Endothelial cell of umbilical vein (primary cell): ENCODE measurements at regions of chr14 and their contacts with region 1.

Region 1: GRCh38 chr14:54396493-54397335 is at the start of gene CDKN3:
- DNase-seq: peak; percentile 100
- H3K4me3 ChIP-seq: peak within 1 kb of the TSS; percentile 7 to 76 (median 61)
- H3K27ac ChIP-seq: peak within 1 kb of the TSS; percentile 14
- H3K4me1 ChIP-seq: peaks cover 8% of the 10 kb centered on the region
- H3K27me3 ChIP-seq: peaks cover 0 to 4% of the 10 kb centered on the region in 2 experiments
- CTCF ChIP-seq: peak in 1 of 2 donors; percentile 42
- POLR2A ChIP-seq: peak; percentile 65
- total RNA-seq, gene CDKN3: 52.0 and 53.2 TPM in 2 replicates

Region 2: DNA sequence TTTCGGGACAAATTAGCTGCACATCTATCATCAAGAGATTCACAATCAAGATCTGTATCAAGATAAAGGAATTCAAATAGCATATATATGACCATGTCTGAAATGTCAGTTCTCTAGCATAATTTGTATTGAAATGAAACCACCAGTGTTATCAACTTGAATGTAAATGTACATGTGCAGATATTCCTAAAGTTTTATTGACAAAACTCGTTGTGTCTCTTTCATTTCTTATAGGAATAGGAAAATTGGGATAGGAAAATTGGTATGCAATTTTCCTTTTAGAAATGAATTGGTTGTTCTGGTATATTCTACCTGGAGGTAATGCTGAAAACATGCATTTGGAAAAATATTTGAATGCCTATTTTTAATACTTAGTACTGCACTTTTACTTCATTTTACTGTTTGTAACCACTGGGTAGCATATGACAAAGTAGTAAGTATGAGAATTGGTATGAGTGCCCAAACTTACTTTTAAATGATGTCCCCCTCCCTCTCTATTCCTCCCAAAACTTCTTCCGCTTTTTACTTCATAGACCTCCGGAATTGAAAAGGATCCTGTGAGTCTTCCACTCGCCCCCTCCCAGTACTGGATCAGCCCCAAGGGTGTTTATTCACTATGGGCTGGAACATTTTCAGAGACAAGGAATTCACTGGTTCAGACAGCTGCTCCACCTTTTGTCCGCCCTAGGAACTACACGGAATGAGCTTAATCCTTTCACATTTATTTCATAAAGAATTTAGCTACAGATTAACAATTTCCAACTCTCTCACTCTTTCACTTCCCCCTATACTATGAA is 23.5 kb after region 1 on chr14:
- CTCF ChIA-PET with region 1: interaction called, 27 read pairs
- POLR2A ChIA-PET with region 1: no interaction called
- dilution Hi-C with region 1: no loop called
- intact Hi-C with region 1: no loop called
- DNase-seq: peak; percentile 75
- H3K4me3 ChIP-seq: no peak overlapping the region
- H3K27ac ChIP-seq: no peak overlapping the region
- H3K4me1 ChIP-seq: no peaks in the 10 kb centered on the region
- H3K27me3 ChIP-seq: no peaks in the 10 kb centered on the region
- CTCF ChIP-seq: peak; percentile 49 to 57
- POLR2A ChIP-seq: no peak

Region 3: DNA sequence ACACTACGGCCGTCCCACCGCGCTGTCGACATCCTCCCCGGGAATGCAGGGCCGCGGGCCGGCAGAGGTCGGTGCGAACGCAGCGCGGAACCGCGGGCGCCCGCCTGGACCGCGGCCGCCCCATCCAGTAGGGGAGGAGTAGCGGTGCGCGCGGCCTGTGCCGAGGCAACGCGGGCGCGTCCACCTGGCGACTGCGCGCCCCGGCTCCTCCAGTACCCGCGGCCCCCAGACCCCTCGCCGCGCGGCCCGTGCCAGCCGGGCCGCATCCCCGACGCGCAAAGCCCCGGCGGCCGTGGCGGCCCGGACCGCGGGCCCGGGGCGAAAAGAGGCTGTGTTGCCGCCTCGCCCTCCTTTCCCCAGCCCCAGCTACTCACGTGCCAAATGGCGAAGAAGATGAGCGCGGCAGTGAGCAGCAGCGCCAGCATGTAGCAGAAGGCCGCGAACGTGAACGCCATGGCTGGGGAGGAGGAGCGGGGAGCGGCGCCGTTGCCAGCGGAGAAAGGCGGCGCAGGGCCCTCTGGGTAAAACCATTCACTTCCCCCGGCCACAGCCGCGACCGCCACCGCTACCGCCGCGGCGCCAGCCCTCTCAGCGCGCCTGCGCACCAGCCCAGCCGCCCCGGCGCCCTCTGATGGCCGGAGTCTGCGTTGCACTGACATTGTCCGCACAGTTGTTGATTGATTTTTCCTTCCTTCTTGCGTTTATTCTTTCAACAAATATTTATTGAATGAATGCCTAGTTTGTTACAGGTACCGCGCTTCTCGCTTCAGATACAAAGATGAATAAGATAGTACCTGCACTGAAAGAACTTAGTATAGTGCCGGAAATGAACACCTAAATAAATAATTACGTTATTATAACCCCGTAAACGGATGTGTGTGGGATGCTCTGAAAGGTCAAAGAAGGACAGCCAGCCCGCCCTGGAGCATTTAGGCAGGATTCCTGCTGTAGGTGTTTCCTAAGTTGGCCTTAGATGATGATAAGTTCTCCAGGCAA is 44.5 kb after region 1 on chr14 and contains the start of gene CNIH1:
- CTCF ChIA-PET with region 1: interaction called, 8 read pairs
- POLR2A ChIA-PET with region 1: interaction called, 5 read pairs
- dilution Hi-C with region 1: no loop called
- intact Hi-C with region 1: loop called (anchors 2 kb)
- DNase-seq: peak; percentile 94
- H3K4me3 ChIP-seq: peak within 1 kb of the TSS; percentile 50 to 90 (median 70)
- H3K27ac ChIP-seq: peak within 1 kb of the TSS; percentile 83
- H3K4me1 ChIP-seq: peaks cover 18% of the 10 kb centered on the region
- H3K27me3 ChIP-seq: peaks cover 10 to 17% of the 10 kb centered on the region in 2 experiments
- CTCF ChIP-seq: peak; percentile 82 to 95
- POLR2A ChIP-seq: peak; percentile 88
- total RNA-seq, gene CNIH1: 125 and 137 TPM in 2 replicates

Region 4: GRCh38 chr14:54572316-54572715 is 175.6 kb after region 1 on chr14:
- CTCF ChIA-PET with region 1: no interaction called
- POLR2A ChIA-PET with region 1: no interaction called
- dilution Hi-C with region 1: no loop called
- intact Hi-C with region 1: no loop called
- DNase-seq: peak; percentile 47
- H3K4me3 ChIP-seq: no peak overlapping the region
- H3K27ac ChIP-seq: no peak overlapping the region
- H3K4me1 ChIP-seq: peaks cover 37% of the 10 kb centered on the region
- H3K27me3 ChIP-seq: no peaks in the 10 kb centered on the region
- CTCF ChIP-seq: peak; percentile 39 to 45
- POLR2A ChIP-seq: no peak